Body of pancreas (tissue), 4 donors: ENCODE measurements at regions of chr7 and their contacts with region 1.

Region 1: GRCh38 chr7:37198906-37199485 is 249.7 kb downstream of the ELMO1 start:
- DNase-seq: peak; percentile 87 to 92 (median 88)
- ATAC-seq: peak; percentile 84
- H3K4me3 ChIP-seq: no peak overlapping the region
- H3K27ac ChIP-seq: no peak overlapping the region
- H3K4me1 ChIP-seq: peaks cover 24% of the 10 kb centered on the region
- H3K27me3 ChIP-seq: no peaks in the 10 kb centered on the region
- CTCF ChIP-seq: peak; percentile 55 to 92 (median 89)
- POLR2A ChIP-seq: no peak

Region 2: GRCh38 chr7:36439624-36440023 is 759.4 kb before region 1 on chr7:
- intact Hi-C with region 1: loop called (anchors 5 kb)
- DNase-seq: no peak
- ATAC-seq: no peak
- H3K4me3 ChIP-seq: no peak overlapping the region
- H3K27ac ChIP-seq: no peak overlapping the region
- H3K4me1 ChIP-seq: peaks cover 18% of the 10 kb centered on the region
- H3K27me3 ChIP-seq: no peaks in the 10 kb centered on the region
- CTCF ChIP-seq: no peak
- POLR2A ChIP-seq: no peak

Region 3: DNA sequence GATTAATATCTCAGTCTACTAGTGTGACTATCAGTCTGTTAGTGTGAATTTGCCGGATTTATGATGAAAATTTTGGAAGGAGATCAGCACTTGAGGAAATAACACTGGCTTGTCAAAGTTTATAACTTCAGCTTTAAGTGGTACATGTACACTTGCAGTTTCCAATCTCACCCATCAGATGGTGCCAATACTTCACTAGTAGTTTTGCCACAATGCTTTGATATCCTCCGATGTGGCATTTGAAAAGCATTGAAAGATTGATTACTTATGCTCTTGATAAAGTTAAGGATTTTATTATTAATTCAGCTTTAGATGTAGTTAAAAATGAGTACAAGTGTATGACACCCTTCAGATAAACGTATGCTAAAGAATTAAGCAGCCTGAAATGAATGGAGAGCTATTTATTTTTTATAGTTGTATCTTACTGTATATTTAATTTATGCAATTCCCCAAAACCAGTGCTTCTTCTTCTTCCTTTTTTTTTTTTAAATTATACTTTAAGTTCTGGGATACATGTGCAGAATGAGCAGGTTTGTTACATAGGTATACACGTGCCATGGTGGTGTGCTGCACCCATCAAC is 711.1 kb before region 1 on chr7:
- intact Hi-C with region 1: loop called (anchors 5 kb)
- DNase-seq: peak; percentile 36 to 64 (median 46)
- ATAC-seq: peak; percentile 82
- H3K4me3 ChIP-seq: no peak overlapping the region
- H3K27ac ChIP-seq: no peak overlapping the region
- H3K4me1 ChIP-seq: no peaks in the 10 kb centered on the region
- H3K27me3 ChIP-seq: no peaks in the 10 kb centered on the region
- CTCF ChIP-seq: peak; percentile 40 to 94 (median 91)
- POLR2A ChIP-seq: no peak

Region 4: GRCh38 chr7:37297546-37297945 is 98.5 kb after region 1 on chr7:
- intact Hi-C with region 1: no loop called
- DNase-seq: no peak
- ATAC-seq: no peak
- H3K4me3 ChIP-seq: no peak overlapping the region
- H3K27ac ChIP-seq: no peak overlapping the region
- H3K4me1 ChIP-seq: no peaks in the 10 kb centered on the region
- H3K27me3 ChIP-seq: no peaks in the 10 kb centered on the region
- CTCF ChIP-seq: no peak
- POLR2A ChIP-seq: no peak